CD8-positive, alpha-beta T cell (primary cell): ENCODE measurements at regions of chr13 and their contacts with region 1.

Region 1: DNA sequence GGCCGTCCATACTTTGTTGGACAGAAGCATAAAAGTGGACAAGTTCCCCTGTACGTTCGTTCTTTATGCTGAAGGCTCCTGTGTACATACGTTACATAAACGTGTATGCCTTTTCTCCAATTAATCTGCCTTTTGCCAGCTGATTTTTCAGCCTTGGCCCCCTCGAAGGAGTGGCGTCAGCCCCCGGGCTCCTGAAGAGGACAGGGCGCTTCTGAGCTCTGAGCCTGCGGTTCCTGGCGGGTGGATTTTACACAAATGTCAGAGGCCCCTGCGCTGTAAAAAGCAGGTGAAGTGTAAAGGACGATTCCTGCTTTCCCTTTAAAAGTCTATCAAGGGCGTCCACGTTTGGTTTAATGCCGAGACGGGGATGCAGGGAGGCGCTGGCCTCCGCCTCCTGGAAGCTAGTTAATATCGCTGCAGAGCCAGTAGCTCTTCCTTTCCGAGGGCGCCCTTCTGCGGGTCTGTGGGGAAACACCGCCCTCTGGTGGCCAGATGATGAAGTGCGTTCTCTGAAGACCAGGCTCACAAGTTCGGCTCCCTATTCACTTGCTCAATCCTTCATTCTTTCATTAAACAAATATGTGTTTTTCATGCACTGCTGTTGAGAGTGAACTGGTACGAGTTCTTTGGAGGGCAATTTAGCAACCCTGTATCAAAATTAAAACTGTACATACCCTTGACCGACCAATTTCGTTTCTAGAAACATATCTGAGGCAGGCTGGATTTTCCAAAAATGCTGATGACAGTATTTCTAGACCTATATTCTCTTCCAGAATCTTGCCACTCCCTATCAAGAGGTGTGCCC is 62.0 kb downstream of the GPR12 start:
- DNase-seq: peak; percentile 64 to 90 (median 81)
- ATAC-seq: peak; percentile 88
- H3K4me3 ChIP-seq: no peak overlapping the region
- H3K4me3 Mint-ChIP-seq: no peak overlapping the region
- H3K27ac ChIP-seq: no peak overlapping the region
- H3K27ac Mint-ChIP-seq: no peak overlapping the region
- H3K4me1 ChIP-seq: no peaks in the 10 kb centered on the region
- H3K4me1 Mint-ChIP-seq: peaks cover 4% of the 10 kb centered on the region
- H3K27me3 ChIP-seq: no peaks in the 10 kb centered on the region
- H3K27me3 Mint-ChIP-seq: peaks cover 4% of the 10 kb centered on the region
- CTCF ChIP-seq: peak; percentile 97

Region 2: GRCh38 chr13:25574437-25575411 is 1123.9 kb before region 1 on chr13:
- CTCF ChIA-PET with region 1: interaction called, 4 read pairs
- POLR2A ChIA-PET with region 1: no interaction called
- intact Hi-C with region 1: loop called (anchors 1 to 5 kb)
- DNase-seq: peak; percentile 46 to 80 (median 73)
- ATAC-seq: peak; percentile 66
- H3K4me3 ChIP-seq: no peak overlapping the region
- H3K4me3 Mint-ChIP-seq: no peak overlapping the region
- H3K27ac ChIP-seq: no peak overlapping the region
- H3K27ac Mint-ChIP-seq: no peak overlapping the region
- H3K4me1 ChIP-seq: no peaks in the 10 kb centered on the region
- H3K4me1 Mint-ChIP-seq: no peaks in the 10 kb centered on the region
- H3K27me3 ChIP-seq: peaks cover 0 to 4% of the 10 kb centered on the region in 2 experiments
- H3K27me3 Mint-ChIP-seq: peaks cover 28% of the 10 kb centered on the region
- CTCF ChIP-seq: peak; percentile 68

Region 3: GRCh38 chr13:26062844-26063444 is 635.6 kb before region 1 on chr13:
- CTCF ChIA-PET with region 1: no interaction called
- POLR2A ChIA-PET with region 1: no interaction called
- intact Hi-C with region 1: loop called in 1 of 2 experiments (anchors 10 kb)
- DNase-seq: peak in 5 of 9 experiments; percentile 33 to 72 (median 54)
- ATAC-seq: peak; percentile 52
- H3K4me3 ChIP-seq: no peak overlapping the region
- H3K4me3 Mint-ChIP-seq: no peak overlapping the region
- H3K27ac ChIP-seq: no peak overlapping the region
- H3K27ac Mint-ChIP-seq: no peak overlapping the region
- H3K4me1 ChIP-seq: no peaks in the 10 kb centered on the region
- H3K4me1 Mint-ChIP-seq: no peaks in the 10 kb centered on the region
- H3K27me3 ChIP-seq: no peaks in the 10 kb centered on the region
- H3K27me3 Mint-ChIP-seq: no peaks in the 10 kb centered on the region
- CTCF ChIP-seq: peak; percentile 68

Region 4: GRCh38 chr13:26482451-26483197 is 216.0 kb before region 1 on chr13:
- CTCF ChIA-PET with region 1: interaction called, 3 read pairs
- POLR2A ChIA-PET with region 1: no interaction called
- intact Hi-C with region 1: loop called in 1 of 2 experiments (anchors 5 kb)
- DNase-seq: peak; percentile 21 to 89 (median 72)
- ATAC-seq: peak; percentile 98
- H3K4me3 ChIP-seq: no peak overlapping the region
- H3K4me3 Mint-ChIP-seq: peak overlapping the region; percentile 39
- H3K27ac ChIP-seq: peak overlapping the region in 1 of 2 experiments; percentile 11
- H3K27ac Mint-ChIP-seq: peak overlapping the region; percentile 55
- H3K4me1 ChIP-seq: peaks cover 23% of the 10 kb centered on the region
- H3K4me1 Mint-ChIP-seq: peaks cover 13% of the 10 kb centered on the region
- H3K27me3 ChIP-seq: no peaks in the 10 kb centered on the region
- H3K27me3 Mint-ChIP-seq: no peaks in the 10 kb centered on the region
- CTCF ChIP-seq: peak; percentile 85

Region 5: GRCh38 chr13:26498656-26499591 is 199.7 kb before region 1 on chr13:
- CTCF ChIA-PET with region 1: interaction called, 3 read pairs
- POLR2A ChIA-PET with region 1: no interaction called
- intact Hi-C with region 1: loop called (anchors 5 to 10 kb)
- DNase-seq: no peak
- ATAC-seq: no peak
- H3K4me3 ChIP-seq: no peak overlapping the region
- H3K4me3 Mint-ChIP-seq: no peak overlapping the region
- H3K27ac ChIP-seq: no peak overlapping the region
- H3K27ac Mint-ChIP-seq: no peak overlapping the region
- H3K4me1 ChIP-seq: no peaks in the 10 kb centered on the region
- H3K4me1 Mint-ChIP-seq: peaks cover 4% of the 10 kb centered on the region
- H3K27me3 ChIP-seq: no peaks in the 10 kb centered on the region
- H3K27me3 Mint-ChIP-seq: peaks cover 11% of the 10 kb centered on the region
- CTCF ChIP-seq: no peak

Region 6: GRCh38 chr13:26688286-26688685 is 10.3 kb before region 1 on chr13:
- CTCF ChIA-PET with region 1: interaction called, 29 read pairs
- POLR2A ChIA-PET with region 1: no interaction called
- intact Hi-C with region 1: no loop called
- DNase-seq: no peak
- ATAC-seq: no peak
- H3K4me3 ChIP-seq: no peak overlapping the region
- H3K4me3 Mint-ChIP-seq: no peak overlapping the region
- H3K27ac ChIP-seq: no peak overlapping the region
- H3K27ac Mint-ChIP-seq: no peak overlapping the region
- H3K4me1 ChIP-seq: no peaks in the 10 kb centered on the region
- H3K4me1 Mint-ChIP-seq: no peaks in the 10 kb centered on the region
- H3K27me3 ChIP-seq: no peaks in the 10 kb centered on the region
- H3K27me3 Mint-ChIP-seq: peaks cover 6% of the 10 kb centered on the region
- CTCF ChIP-seq: no peak

Region 7: DNA sequence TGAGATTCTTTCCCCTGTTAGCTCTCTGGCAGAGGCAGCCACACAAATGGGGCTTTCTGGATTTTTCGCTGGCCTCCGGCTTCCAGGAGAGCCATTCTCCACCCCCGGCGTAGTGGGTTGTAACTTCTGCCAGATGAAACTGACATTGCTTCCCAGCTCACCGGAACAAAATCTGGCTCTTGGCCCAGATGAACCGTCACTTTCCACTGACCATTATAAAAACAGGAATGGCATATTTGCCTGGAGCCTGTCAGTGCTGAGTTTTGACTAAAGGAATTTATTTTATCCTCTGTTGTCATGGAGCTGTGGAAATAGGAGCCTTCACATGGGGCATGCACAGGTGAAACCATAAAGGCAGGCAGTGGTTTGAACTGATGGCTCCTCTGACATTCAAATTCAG is 182.6 kb after region 1 on chr13:
- CTCF ChIA-PET with region 1: no interaction called
- POLR2A ChIA-PET with region 1: no interaction called
- intact Hi-C with region 1: no loop called
- DNase-seq: no peak
- ATAC-seq: no peak
- H3K4me3 ChIP-seq: no peak overlapping the region
- H3K4me3 Mint-ChIP-seq: no peak overlapping the region
- H3K27ac ChIP-seq: no peak overlapping the region
- H3K27ac Mint-ChIP-seq: no peak overlapping the region
- H3K4me1 ChIP-seq: no peaks in the 10 kb centered on the region
- H3K4me1 Mint-ChIP-seq: no peaks in the 10 kb centered on the region
- H3K27me3 ChIP-seq: no peaks in the 10 kb centered on the region
- H3K27me3 Mint-ChIP-seq: peaks cover 15% of the 10 kb centered on the region
- CTCF ChIP-seq: no peak

Region 8: DNA sequence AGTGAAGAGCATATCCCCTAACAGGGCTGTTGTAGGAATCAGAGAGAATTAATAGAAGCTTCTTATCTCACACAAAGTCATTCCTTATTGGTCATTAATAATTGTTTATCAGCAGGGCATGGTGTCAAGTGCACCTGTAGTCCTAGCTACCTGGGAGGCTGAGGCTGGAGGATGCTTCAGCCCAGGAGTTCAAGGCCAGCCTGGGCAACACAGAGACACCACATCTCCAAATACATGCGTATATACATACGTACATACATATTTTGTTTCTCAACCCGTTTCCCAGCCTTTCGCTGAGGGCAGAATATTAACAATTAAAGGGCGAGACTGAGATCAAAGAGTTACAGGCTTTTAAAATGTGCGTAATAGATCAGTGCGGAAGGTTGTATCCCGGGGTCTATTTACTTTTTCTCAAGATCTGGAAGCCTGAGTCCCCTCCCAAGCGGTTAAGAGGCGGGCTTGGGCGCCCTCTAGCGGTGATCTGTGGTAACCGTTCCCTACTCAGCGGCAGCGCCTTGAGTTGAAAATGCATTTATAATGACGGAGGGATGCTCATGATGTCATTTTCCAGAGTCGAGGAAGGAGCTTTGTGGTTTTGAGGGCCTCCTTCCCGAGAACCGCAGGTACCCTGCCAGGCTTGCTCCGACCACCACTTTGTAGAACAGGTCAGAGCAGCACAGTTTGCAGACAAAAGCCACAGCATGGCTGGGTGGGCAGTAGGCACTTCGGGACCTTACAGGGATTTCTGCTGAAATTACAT is 231.6 kb after region 1 on chr13:
- CTCF ChIA-PET with region 1: interaction called, 6 read pairs
- POLR2A ChIA-PET with region 1: no interaction called
- intact Hi-C with region 1: loop called in 1 of 2 experiments (anchors 2 kb)
- DNase-seq: peak; percentile 51 to 83 (median 64)
- ATAC-seq: peak; percentile 44
- H3K4me3 ChIP-seq: no peak overlapping the region
- H3K4me3 Mint-ChIP-seq: no peak overlapping the region
- H3K27ac ChIP-seq: no peak overlapping the region
- H3K27ac Mint-ChIP-seq: no peak overlapping the region
- H3K4me1 ChIP-seq: no peaks in the 10 kb centered on the region
- H3K4me1 Mint-ChIP-seq: peaks cover 3% of the 10 kb centered on the region
- H3K27me3 ChIP-seq: peaks cover 0 to 2% of the 10 kb centered on the region in 2 experiments
- H3K27me3 Mint-ChIP-seq: peaks cover 2% of the 10 kb centered on the region
- CTCF ChIP-seq: peak; percentile 96